ENCODE measurements at regions of chr1 and their contacts with region 1.

Region 1: GRCh38 chr1:42657971-42658879 is at the start of gene PPIH:
- DNase-seq: peak; percentile 87 to 97 (median 95)
- ATAC-seq: peak; percentile 98
- H3K4me3 ChIP-seq: peak within 1 kb of the TSS; percentile 78 to 90
- H3K4me3 Mint-ChIP-seq: peak within 1 kb of the TSS; percentile 99
- H3K27ac ChIP-seq: peak within 1 kb of the TSS; percentile 54 to 81
- H3K27ac Mint-ChIP-seq: peak within 1 kb of the TSS; percentile 87
- H3K4me1 ChIP-seq: peaks cover 24% of the 10 kb centered on the region
- H3K4me1 Mint-ChIP-seq: peaks cover 45% of the 10 kb centered on the region
- H3K27me3 ChIP-seq: no peaks in the 10 kb centered on the region
- H3K27me3 Mint-ChIP-seq: no peaks in the 10 kb centered on the region
- CTCF ChIP-seq: no peak
- total RNA-seq, gene PPIH: 31.0 to 33.2 TPM

Region 2: DNA sequence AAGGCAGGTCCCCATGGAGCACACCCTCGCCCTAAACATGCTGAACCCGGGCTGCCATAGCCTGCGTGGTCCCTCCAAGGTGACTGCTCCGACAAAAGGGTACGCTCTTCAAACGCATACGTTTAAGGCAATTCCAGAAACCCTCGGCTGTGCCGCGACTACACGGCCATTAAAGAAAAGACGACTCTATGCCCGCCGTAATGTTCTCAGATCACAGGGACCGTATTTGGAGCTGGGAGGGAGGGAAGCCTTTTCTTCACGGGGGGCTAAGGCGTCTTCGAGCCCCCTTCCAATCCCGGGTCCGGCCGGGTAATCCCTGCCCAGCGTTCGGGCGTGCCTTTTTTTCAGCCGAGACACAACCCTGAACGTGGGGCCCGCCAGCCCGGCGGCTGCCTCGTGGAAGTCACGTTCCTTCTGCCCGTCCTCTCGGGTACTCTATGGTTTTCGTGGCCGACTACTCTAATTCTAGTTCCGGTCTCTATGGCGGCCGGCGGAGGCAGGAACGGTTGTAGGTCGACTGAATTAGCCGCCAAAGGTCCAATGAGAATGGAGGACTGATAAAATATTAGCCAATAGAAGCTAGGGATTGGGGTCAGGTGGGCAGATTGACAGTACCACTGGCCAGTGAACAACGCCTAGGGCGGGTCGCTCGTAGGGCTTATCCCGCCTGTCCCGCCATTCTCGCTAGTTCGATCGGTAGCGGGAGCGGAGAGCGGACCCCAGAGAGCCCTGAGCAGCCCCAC is 23.7 kb after region 1 on chr1 and contains the start of gene YBX1:
- CTCF ChIA-PET with region 1: interaction called, 4 read pairs
- POLR2A ChIA-PET with region 1: interaction called, 39 read pairs
- intact Hi-C with region 1: loop called (anchors 1 kb)
- DNase-seq: peak; percentile 88 to 98 (median 95)
- ATAC-seq: peak; percentile 89
- H3K4me3 ChIP-seq: peak within 1 kb of the TSS; percentile 81 to 84
- H3K4me3 Mint-ChIP-seq: peak within 1 kb of the TSS; percentile 99
- H3K27ac ChIP-seq: peak within 1 kb of the TSS; percentile 82 to 88
- H3K27ac Mint-ChIP-seq: peak within 1 kb of the TSS; percentile 97
- H3K4me1 ChIP-seq: peaks cover 43% of the 10 kb centered on the region
- H3K4me1 Mint-ChIP-seq: peaks cover 58% of the 10 kb centered on the region
- H3K27me3 ChIP-seq: no peaks in the 10 kb centered on the region
- H3K27me3 Mint-ChIP-seq: no peaks in the 10 kb centered on the region
- CTCF ChIP-seq: no peak
- total RNA-seq, gene YBX1: 440 to 450 TPM

Region 3: GRCh38 chr1:42713293-42713692 is 55.1 kb after region 1 on chr1:
- CTCF ChIA-PET with region 1: no interaction called
- POLR2A ChIA-PET with region 1: no interaction called
- intact Hi-C with region 1: no loop called
- DNase-seq: no peak
- ATAC-seq: no peak
- H3K4me3 ChIP-seq: no peak overlapping the region
- H3K4me3 Mint-ChIP-seq: no peak overlapping the region
- H3K27ac ChIP-seq: no peak overlapping the region
- H3K27ac Mint-ChIP-seq: no peak overlapping the region
- H3K4me1 ChIP-seq: no peaks in the 10 kb centered on the region
- H3K4me1 Mint-ChIP-seq: peaks cover 3% of the 10 kb centered on the region
- H3K27me3 ChIP-seq: no peaks in the 10 kb centered on the region
- H3K27me3 Mint-ChIP-seq: no peaks in the 10 kb centered on the region
- CTCF ChIP-seq: no peak

Measured in CD8-positive, alpha-beta T cell (primary cell).